RWPE1 (cell line): ENCODE measurements at regions of chr17 and their contacts with region 1.

Region 1: DNA sequence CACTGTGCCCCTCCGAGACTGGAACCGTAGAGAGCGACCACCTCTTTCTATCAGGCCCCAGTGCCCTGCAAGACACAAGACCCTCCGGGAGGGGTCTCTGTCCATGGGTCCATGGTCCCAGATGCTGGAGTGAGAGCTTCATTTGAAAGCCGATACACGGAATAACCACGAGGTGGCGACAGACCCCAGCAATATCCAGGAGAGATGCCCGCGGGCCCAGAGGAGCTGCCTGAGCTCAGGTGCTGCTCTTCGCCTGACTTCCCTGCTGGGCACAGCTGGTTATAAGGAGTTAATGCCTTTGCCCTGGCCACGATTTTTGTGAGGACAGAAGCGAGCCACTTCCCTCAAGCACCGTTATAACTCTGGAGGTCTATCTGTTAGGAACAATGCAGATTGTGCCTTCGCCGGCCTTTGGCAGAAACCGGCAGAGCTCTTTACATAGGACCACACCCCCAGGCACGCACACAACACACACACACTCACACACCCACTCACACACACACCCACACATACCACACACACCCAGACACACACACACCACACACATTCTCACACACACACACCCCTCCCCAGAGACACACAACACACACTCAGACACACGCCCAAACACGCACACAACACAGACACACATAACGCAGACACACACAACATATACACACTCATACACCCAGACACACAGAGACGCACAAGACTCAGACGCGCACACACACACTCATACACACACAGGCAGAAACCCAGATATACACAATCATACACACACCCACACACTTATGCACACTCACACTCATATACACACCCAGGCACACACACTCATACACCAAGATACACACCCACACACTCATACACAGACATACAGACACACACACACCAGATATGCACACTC is 436.4 kb downstream of the SOX9 start:
- DNase-seq: peak; percentile 72
- H3K27ac ChIP-seq: peak overlapping the region; percentile 57
- CTCF ChIP-seq: peak; percentile 87

Region 2: GRCh38 chr17:71976011-71976649 is 581.1 kb before region 1 on chr17:
- CTCF ChIA-PET with region 1: no interaction called
- POLR2A ChIA-PET with region 1: no interaction called
- DNase-seq: peak; percentile 96
- H3K27ac ChIP-seq: peak overlapping the region; percentile 94
- CTCF ChIP-seq: no peak

Region 3: GRCh38 chr17:72603420-72604242 is 46.4 kb after region 1 on chr17:
- CTCF ChIA-PET with region 1: no interaction called
- POLR2A ChIA-PET with region 1: no interaction called
- DNase-seq: no peak
- H3K27ac ChIP-seq: peak overlapping the region; percentile 66
- CTCF ChIP-seq: no peak

Region 4: GRCh38 chr17:73156166-73156840 is 599.1 kb after region 1 on chr17:
- CTCF ChIA-PET with region 1: interaction called, 14 read pairs
- POLR2A ChIA-PET with region 1: no interaction called
- DNase-seq: peak; percentile 76
- H3K27ac ChIP-seq: no peak overlapping the region
- CTCF ChIP-seq: peak; percentile 70

Region 5: DNA sequence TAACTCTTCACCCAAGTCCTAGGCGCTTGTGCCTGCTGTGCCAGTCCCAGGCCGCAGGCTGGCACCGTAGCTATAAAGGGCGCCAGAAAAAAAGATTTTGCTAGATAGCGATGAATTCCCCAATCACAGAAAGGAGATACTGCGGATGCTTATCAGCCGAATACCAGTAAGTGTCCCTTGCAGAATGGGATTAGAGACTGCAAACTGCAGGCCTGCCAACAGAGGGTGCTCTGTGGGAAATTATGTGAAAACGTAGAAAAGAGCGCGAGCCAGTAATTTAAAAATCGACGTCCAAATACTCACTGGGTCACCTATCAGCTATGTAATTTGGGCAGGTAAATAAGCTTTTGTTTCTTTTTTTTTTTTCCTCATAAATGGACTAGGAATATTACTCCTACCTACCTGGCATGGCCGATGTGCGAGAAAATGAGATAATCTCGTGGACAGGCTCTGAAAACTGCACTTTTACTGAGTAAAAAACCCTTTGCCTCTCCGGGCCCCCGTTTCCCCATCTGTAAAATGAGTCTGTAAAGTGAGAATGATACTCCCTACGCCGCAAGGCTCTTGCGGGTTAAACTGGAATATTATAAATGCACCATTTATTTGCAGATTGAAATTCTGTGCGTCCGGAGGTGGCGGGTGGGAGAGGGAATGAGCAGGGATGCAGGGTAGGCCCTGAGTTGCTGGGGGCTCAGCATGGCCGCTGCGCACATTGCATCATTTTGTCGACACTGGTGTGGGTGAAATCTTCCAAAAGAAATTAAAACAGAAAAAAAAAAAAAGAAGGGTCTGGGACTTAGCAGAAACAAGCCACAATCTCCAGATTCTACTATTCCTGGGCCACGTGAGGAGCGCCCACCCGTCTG is 634.5 kb after region 1 on chr17:
- CTCF ChIA-PET with region 1: interaction called, 10 read pairs
- POLR2A ChIA-PET with region 1: no interaction called
- DNase-seq: peak; percentile 71
- H3K27ac ChIP-seq: peak overlapping the region; percentile 99
- CTCF ChIP-seq: peak; percentile 97